ENCODE measurements at regions of chr2 and their contacts with region 1.

Region 1: GRCh38 chr2:71000780-71001591 is 6.3 kb upstream of the TEX261 start:
- DNase-seq: peak; percentile 91
- ATAC-seq: peak; percentile 97
- H3K4me3 Mint-ChIP-seq: peak overlapping the region; percentile 77
- H3K27ac Mint-ChIP-seq: peak overlapping the region; percentile 85
- H3K4me1 Mint-ChIP-seq: peaks cover 13% of the 10 kb centered on the region
- H3K27me3 Mint-ChIP-seq: no peaks in the 10 kb centered on the region

Region 2: DNA sequence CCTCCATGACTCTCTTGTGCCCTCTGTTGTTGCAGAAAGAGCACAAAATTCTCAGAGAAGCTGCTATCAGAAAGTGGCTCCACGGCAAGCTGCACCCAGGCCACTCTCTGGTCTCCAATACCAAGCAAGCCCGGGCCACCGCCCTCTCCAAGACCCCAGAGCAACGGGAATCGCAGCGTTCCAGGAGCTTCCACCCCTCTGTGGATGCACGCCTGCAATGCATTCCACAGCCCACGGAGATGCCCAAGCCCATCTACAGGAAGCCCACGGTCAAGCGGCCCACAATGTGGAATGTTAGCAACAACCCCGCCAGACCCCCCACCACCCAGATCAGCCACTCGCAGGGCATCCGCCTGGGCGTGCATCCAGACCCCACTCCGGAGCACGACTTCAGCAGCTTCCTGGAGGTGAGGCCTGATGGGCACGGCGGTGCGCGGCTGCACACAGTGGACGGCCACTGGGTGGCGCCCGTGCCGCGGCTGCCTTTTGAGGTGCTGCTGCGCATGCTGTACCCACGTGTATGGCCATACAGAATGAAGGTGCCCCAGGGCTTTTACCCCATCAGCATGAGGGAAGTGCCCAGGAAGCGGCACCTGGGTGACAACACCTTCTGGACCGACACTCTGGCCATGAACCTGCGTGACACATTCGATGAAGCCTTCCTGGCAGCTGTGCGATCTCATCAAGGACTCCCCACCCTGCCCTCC is 16.3 kb before region 1 on chr2:
- CTCF ChIA-PET with region 1: interaction called, 23 read pairs
- POLR2A ChIA-PET with region 1: interaction called, 4 read pairs
- intact Hi-C with region 1: loop called in 1 of 2 experiments (anchors 1 kb)
- DNase-seq: peak; percentile 92
- ATAC-seq: peak; percentile 100
- H3K4me3 Mint-ChIP-seq: no peak overlapping the region
- H3K27ac Mint-ChIP-seq: no peak overlapping the region
- H3K4me1 Mint-ChIP-seq: peaks cover 12% of the 10 kb centered on the region
- H3K27me3 Mint-ChIP-seq: no peaks in the 10 kb centered on the region

Measured in activated CD4-positive, alpha-beta T cell treated with anti-CD3 and anti-CD28 coated beads for 36 hours (primary cell).